Activated B cell treated with CpG ODN at 0.5 μM for 24 hours (primary cell): ENCODE measurements at regions of chr5 and their contacts with region 1.

Region 1: DNA sequence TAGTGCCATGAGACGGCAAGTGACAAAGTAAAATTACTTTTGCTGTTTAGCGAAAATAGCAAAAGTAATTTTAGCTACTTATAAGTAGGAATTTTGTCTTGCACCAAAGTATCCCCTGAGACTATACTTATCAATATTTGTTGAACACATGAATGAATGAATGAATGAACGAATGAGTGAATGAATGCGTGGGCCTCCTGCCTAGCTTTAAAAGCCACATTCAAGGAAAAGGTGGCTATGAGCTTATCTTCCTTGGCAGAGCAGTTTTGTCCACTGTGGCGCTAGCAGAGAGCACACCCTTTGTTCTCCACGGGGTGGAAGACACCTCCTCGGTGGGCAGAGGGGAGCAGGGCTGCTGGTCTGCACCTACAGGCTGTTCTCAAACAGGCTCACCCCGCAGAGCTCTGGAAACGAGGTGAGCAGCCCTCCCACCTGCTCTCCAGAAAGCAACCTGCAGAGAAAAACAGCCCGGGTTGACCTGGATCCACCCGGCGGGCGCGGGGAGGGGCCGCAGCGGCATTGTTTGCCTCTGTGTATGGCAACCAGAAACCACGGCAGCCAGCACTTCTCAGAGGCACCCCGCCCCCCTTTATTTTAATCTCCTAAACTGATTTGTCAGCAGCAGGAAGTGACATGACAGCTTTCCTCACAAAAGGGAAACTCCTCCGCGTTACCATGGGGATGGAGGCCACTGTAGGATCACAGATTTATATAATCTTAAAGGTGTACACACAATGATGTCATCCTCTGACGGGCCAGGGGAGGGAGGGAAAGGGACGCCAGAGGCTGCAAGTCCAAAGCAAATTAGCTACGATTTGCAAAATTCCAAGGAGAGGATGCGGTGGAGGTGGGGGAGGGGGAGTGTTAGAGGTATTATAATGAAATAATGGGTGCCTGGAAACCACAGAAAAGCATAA is 5.9 kb downstream of the DUSP1 start:
- DNase-seq: peak; percentile 86
- ATAC-seq: peak; percentile 78
- H3K4me3 Mint-ChIP-seq: peak overlapping the region; percentile 84
- H3K27ac Mint-ChIP-seq: peak overlapping the region; percentile 95
- H3K4me1 Mint-ChIP-seq: peaks cover 64% of the 10 kb centered on the region
- H3K27me3 Mint-ChIP-seq: no peaks in the 10 kb centered on the region
- CTCF ChIP-seq: no peak

Region 2: DNA sequence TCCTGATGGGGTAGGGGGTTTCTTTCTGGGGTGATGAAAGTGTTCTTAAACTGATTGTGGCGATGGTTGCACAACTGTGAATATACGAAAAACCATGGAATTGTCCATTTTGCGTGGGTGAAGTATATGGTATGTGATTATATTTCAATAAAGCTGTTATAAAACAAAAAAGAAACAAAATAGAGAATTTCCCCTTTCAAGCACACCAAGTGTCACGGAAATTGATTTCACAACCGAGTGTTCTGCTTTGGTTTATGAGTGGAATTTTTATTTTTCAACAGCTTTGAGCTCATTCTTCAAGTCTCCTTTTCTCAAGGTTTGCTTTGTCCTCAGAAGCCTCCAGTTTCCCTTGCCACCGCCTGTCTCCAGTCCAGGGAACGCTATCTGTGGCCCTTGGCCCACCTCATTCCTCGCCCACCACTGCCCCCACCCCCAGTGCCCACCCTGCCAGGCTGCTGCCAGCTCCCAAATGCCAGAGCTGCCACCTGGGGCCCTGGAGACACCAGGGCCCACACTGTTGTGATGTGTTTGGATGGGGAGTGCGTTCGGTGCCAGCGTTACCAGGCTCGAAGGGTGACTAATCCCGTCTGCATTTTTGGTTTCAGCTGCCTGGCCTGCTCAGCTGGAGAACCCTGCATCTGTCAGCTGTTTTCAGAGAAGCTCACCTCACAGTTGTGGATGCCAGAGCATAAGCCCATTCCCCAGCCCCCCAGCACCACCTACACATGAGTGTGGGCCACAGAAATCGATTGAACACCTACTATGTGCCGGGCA is 24.5 kb before region 1 on chr5:
- CTCF ChIA-PET with region 1: no interaction called
- POLR2A ChIA-PET with region 1: interaction called, 17 read pairs
- intact Hi-C with region 1: loop called (anchors 1 kb)
- DNase-seq: no peak
- ATAC-seq: no peak
- H3K4me3 Mint-ChIP-seq: no peak overlapping the region
- H3K27ac Mint-ChIP-seq: peak overlapping the region; percentile 46
- H3K4me1 Mint-ChIP-seq: peaks cover 33% of the 10 kb centered on the region
- H3K27me3 Mint-ChIP-seq: no peaks in the 10 kb centered on the region
- CTCF ChIP-seq: no peak

Region 3: DNA sequence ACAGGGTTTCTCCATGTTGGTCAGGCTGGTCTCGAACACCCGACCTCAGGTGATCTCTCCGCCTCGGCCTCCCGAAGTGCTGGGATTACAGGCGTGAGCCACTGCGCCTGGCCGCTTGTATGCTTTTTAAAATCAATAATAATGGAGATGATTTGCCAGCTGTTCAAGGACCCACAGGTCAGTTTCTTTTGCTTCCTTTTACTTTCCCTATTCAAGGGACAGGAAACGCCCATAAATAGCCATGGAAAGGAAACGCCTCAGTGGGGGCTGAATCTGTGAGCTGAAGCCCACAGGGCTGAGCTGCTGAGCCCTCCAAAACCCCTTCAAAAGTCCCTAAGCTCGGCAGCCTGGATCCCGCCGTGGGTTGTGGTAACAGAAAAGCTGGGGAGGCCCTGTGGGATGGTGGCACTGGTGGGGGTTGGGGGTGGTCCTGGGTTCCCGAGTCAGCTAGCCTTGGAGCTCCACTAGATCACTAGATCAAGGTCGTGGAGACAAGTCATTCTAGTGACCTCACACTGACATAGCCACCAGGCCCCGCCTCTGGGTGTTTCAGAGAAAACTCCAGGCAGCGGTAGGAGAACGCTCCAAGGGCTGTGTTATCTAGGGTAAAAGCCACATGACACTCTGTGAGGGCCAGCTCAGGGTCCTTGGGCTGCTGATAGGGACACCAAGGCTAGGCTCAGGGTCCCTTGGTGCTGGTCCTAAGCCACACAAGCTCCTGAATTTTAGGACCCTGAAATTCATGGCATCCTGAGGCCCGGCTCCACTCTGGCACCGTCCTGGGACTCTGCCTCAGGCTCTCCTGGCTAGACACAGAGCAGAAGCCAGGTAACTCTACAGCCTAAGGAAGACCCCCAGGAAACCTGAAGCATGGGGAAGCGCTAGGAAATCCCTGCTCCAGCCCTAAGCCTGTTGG is 23.9 kb after region 1 on chr5:
- CTCF ChIA-PET with region 1: no interaction called
- POLR2A ChIA-PET with region 1: interaction called, 17 read pairs
- intact Hi-C with region 1: loop called (anchors 1 kb)
- DNase-seq: no peak
- ATAC-seq: peak; percentile 18
- H3K4me3 Mint-ChIP-seq: no peak overlapping the region
- H3K27ac Mint-ChIP-seq: no peak overlapping the region
- H3K4me1 Mint-ChIP-seq: peaks cover 14% of the 10 kb centered on the region
- H3K27me3 Mint-ChIP-seq: no peaks in the 10 kb centered on the region
- CTCF ChIP-seq: no peak

Region 4: DNA sequence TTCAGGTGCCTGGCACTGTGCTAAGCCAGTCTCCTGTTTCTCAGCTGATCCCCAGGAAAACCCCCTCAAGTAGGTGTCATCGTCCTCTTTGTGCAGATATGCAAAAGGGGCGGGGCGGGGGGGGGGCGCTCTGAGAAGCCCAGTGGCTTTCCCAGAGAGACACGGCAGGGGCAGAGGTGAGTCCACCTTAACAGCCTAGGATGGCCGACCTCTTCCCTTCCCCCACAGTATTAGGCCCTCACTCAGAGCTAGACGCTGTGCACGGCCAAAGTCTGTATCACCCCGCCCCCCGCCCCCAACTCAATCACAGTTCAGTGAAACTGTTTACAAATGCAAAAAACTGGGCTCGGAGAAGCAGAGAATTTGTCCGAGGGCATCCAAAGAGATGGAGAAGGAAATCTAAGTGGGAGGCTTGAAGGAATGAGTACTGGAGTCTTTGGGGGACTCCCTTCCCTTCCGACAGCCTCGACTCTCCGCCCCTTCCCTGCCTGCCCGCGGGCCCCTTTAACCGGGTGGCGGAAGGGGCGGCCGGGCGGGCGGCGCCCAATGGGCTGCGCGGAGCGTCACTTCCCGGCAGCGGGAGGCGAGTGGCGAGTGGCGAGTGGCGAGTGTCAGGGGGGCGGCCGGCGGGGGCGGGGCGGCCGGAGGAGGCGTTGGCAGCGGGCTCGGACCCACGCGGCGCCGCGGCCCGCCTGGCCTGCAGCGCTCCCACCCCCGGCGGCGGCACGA is 68.7 kb after region 1 on chr5 and contains the start of gene ERGIC1:
- CTCF ChIA-PET with region 1: interaction called, 6 read pairs
- POLR2A ChIA-PET with region 1: interaction called, 128 read pairs
- intact Hi-C with region 1: loop called (anchors 1 kb)
- DNase-seq: peak; percentile 79
- ATAC-seq: peak; percentile 78
- H3K4me3 Mint-ChIP-seq: peak within 1 kb of the TSS; percentile 89
- H3K27ac Mint-ChIP-seq: peak within 1 kb of the TSS; percentile 92
- H3K4me1 Mint-ChIP-seq: peaks cover 48% of the 10 kb centered on the region
- H3K27me3 Mint-ChIP-seq: no peaks in the 10 kb centered on the region
- CTCF ChIP-seq: no peak
- total RNA-seq, gene ERGIC1: 69.6 and 72.5 TPM in 2 replicates

Region 5: GRCh38 chr5:172958331-172959046 is 193.4 kb after region 1 on chr5:
- CTCF ChIA-PET with region 1: no interaction called
- POLR2A ChIA-PET with region 1: interaction called, 21 read pairs
- intact Hi-C with region 1: loop called (anchors 1 kb)
- DNase-seq: peak; percentile 64
- ATAC-seq: peak; percentile 76
- H3K4me3 Mint-ChIP-seq: peak overlapping the region; percentile 97
- H3K27ac Mint-ChIP-seq: peak overlapping the region; percentile 94
- H3K4me1 Mint-ChIP-seq: peaks cover 31% of the 10 kb centered on the region
- H3K27me3 Mint-ChIP-seq: no peaks in the 10 kb centered on the region
- CTCF ChIP-seq: no peak